CD4-positive, alpha-beta memory T cell (primary cell): ENCODE measurements at regions of chr4 and their contacts with region 1.

Region 1: GRCh38 chr4:6716018-6716911 is at the start of gene BLOC1S4:
- DNase-seq: peak; percentile 86 to 94 (median 93)
- H3K4me3 ChIP-seq: peak within 1 kb of the TSS; percentile 38 to 84
- H3K4me3 Mint-ChIP-seq: peak within 1 kb of the TSS; percentile 87 to 99 (median 93)
- H3K27ac ChIP-seq: peak within 1 kb of the TSS; percentile 92
- H3K27ac Mint-ChIP-seq: peak within 1 kb of the TSS; percentile 92 to 99 (median 98)
- H3K4me1 ChIP-seq: peaks cover 38% of the 10 kb centered on the region
- H3K4me1 Mint-ChIP-seq: peaks cover 25 to 48% (median 35%) of the 10 kb centered on the region in 4 donors
- H3K27me3 ChIP-seq: no peaks in the 10 kb centered on the region
- H3K27me3 Mint-ChIP-seq: no peaks in the 10 kb centered on the region
- total RNA-seq, gene BLOC1S4: 35.3 to 37.8 TPM

Region 2: DNA sequence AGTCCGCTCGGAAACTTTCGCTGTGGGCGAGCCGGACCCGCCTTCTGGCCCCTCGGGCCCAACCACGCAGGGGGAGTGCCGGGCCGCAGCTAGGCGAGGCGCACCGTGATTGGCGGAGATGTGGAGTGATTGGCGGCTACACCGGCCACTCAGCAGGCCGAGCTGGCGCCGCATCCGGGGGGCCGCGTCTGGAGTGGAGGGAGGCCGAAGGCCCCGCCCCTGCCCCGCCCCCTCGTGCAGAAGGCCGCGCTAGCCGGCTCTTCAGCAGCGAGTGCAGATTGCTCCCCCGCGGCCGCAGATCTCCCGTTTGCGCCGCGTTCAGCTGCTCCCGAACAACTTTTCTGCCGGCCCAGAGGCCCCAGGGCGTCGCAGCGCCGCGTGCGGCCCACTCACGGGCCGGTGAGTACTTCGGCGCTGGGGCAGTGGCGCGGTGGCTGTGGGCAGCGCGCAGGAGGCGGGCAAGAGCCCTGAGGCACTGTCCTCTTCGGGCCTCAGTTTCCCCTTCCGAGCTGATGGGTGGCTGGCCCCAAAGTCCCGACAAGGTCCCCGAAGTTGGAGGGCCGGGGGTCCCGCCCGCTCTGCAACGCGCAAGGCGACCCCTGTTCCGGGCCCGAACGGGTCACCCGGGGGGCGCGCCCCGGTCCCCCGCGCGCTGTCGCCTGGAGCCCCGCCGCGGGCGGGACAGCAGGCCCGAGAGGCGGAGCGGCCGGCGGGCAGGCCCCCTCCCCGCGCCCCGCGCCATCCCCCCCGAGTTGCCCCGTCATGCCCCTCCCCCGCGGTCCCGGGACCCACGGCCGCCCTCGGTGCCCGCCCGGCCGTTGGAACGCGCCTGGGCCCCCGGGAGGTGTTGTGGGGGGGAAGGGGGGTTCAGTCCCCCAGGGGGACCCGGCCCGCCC is 446.4 kb before region 1 on chr4 and contains the start of gene WFS1:
- CTCF ChIA-PET with region 1: no interaction called
- POLR2A ChIA-PET with region 1: no interaction called
- intact Hi-C with region 1: loop called (anchors 5 kb)
- DNase-seq: peak; percentile 94 to 96 (median 94)
- H3K4me3 ChIP-seq: peak within 1 kb of the TSS in 1 of 2 donors; percentile 75
- H3K4me3 Mint-ChIP-seq: peak within 1 kb of the TSS; percentile 85 to 92 (median 88)
- H3K27ac ChIP-seq: peak within 1 kb of the TSS; percentile 49
- H3K27ac Mint-ChIP-seq: peak within 1 kb of the TSS in 6 of 7 donors; percentile 48 to 81 (median 71)
- H3K4me1 ChIP-seq: peaks cover 10% of the 10 kb centered on the region
- H3K4me1 Mint-ChIP-seq: peaks cover 13 to 25% (median 14%) of the 10 kb centered on the region in 4 donors
- H3K27me3 ChIP-seq: no peaks in the 10 kb centered on the region
- H3K27me3 Mint-ChIP-seq: peaks cover 0 to 2% of the 10 kb centered on the region in 2 donors
- total RNA-seq, gene WFS1: 5.4 to 5.5 TPM

Region 3: DNA sequence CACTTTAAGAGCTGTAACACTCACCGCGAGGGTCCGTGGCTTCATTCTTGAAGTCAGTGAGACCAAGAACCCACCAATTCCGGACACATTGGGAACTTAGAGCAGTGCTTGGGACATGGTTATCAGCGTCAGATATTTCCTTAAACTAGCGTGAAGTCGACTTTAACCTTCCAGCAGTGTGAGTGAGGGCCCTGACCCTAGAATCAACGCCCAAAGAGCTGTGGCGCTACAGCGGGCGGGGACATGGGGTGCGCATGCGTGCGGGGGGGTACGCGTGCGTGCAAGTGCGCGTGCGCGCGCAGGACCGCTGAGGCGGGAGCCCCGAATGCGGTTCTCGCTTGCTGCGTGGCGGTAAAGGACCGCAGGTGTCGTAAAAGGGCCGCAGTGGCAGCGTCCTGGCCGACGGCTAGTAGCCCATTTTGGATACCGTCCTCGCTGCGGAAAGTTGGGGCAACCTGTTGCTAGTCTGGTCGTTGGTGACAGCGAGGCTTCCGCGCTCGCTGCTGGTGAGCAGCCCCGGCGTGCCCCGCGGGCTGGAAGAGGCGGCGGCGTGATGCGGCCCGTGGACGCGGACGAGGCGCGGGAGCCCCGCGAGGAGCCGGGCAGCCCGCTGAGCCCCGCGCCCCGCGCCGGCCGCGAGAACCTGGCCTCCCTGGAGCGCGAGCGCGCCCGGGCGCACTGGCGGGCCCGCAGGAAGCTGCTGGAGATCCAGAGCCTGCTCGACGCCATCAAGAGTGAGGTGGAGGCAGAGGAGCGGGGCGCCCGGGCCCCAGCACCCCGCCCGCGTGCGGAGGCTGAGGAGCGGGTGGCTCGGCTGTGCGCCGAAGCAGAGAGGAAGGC is 42.4 kb before region 1 on chr4:
- CTCF ChIA-PET with region 1: interaction called, 115 read pairs
- POLR2A ChIA-PET with region 1: interaction called, 1,401 read pairs
- intact Hi-C with region 1: loop called (anchors 1 kb)
- DNase-seq: peak; percentile 94 to 96 (median 96)
- H3K4me3 ChIP-seq: peak overlapping the region; percentile 59 to 65
- H3K4me3 Mint-ChIP-seq: peak overlapping the region; percentile 92 to 99 (median 98)
- H3K27ac ChIP-seq: peak overlapping the region; percentile 71
- H3K27ac Mint-ChIP-seq: peak overlapping the region; percentile 95 to 99 (median 98)
- H3K4me1 ChIP-seq: peaks cover 36% of the 10 kb centered on the region
- H3K4me1 Mint-ChIP-seq: peaks cover 39 to 59% (median 49%) of the 10 kb centered on the region in 4 donors
- H3K27me3 ChIP-seq: no peaks in the 10 kb centered on the region
- H3K27me3 Mint-ChIP-seq: no peaks in the 10 kb centered on the region

Region 4: DNA sequence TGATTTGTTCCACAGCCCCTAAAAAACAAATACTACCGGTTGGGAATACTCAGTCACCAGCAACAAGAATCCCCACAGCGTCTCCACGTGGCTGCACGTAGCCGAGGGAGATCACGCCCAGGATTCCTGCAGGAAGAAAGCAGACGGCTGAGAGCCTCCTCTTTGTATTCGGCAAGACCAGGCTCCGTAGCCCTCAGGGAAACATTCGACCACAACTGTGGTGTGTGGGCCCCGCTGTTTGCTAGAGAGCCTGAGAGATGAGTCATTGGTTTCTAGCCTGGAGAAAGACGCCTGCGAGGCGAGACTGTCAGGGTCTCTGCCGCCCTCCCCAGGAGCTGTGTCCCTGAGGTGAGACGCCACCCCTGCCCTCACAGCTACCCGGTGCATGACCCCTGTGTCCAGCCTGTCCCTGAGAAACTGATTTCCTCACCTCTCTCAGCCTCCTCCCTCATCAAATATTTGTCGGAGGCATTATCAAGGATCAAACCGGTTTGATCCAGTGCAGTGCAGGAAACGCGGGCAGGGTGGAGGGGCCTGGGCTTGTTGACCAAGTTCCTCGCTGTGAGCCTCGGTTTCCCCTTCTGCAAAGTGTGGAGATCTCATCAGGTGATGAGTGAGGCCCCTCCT is 27.3 kb before region 1 on chr4:
- CTCF ChIA-PET with region 1: interaction called, 21 read pairs
- POLR2A ChIA-PET with region 1: interaction called, 1,401 read pairs
- intact Hi-C with region 1: loop called (anchors 1 kb)
- DNase-seq: peak; percentile 60 to 92 (median 64)
- H3K4me3 ChIP-seq: peak overlapping the region; percentile 18 to 55
- H3K4me3 Mint-ChIP-seq: peak overlapping the region; percentile 87 to 97 (median 93)
- H3K27ac ChIP-seq: peak overlapping the region; percentile 62
- H3K27ac Mint-ChIP-seq: peak overlapping the region; percentile 89 to 99 (median 97)
- H3K4me1 ChIP-seq: peaks cover 73% of the 10 kb centered on the region
- H3K4me1 Mint-ChIP-seq: peaks cover 55 to 88% (median 72%) of the 10 kb centered on the region in 4 donors
- H3K27me3 ChIP-seq: no peaks in the 10 kb centered on the region
- H3K27me3 Mint-ChIP-seq: no peaks in the 10 kb centered on the region

Region 5: GRCh38 chr4:6701371-6701770 is 14.9 kb before region 1 on chr4:
- CTCF ChIA-PET with region 1: interaction called, 21 read pairs
- POLR2A ChIA-PET with region 1: interaction called, 663 read pairs
- intact Hi-C with region 1: no loop called
- DNase-seq: peak in 3 of 5 donors; percentile 36 to 47 (median 40)
- H3K4me3 ChIP-seq: no peak overlapping the region
- H3K4me3 Mint-ChIP-seq: no peak overlapping the region
- H3K27ac ChIP-seq: no peak overlapping the region
- H3K27ac Mint-ChIP-seq: peak overlapping the region in 4 of 7 donors; percentile 19 to 84 (median 44)
- H3K4me1 ChIP-seq: peaks cover 73% of the 10 kb centered on the region
- H3K4me1 Mint-ChIP-seq: peaks cover 56 to 80% (median 69%) of the 10 kb centered on the region in 4 donors
- H3K27me3 ChIP-seq: no peaks in the 10 kb centered on the region
- H3K27me3 Mint-ChIP-seq: no peaks in the 10 kb centered on the region

Region 6: DNA sequence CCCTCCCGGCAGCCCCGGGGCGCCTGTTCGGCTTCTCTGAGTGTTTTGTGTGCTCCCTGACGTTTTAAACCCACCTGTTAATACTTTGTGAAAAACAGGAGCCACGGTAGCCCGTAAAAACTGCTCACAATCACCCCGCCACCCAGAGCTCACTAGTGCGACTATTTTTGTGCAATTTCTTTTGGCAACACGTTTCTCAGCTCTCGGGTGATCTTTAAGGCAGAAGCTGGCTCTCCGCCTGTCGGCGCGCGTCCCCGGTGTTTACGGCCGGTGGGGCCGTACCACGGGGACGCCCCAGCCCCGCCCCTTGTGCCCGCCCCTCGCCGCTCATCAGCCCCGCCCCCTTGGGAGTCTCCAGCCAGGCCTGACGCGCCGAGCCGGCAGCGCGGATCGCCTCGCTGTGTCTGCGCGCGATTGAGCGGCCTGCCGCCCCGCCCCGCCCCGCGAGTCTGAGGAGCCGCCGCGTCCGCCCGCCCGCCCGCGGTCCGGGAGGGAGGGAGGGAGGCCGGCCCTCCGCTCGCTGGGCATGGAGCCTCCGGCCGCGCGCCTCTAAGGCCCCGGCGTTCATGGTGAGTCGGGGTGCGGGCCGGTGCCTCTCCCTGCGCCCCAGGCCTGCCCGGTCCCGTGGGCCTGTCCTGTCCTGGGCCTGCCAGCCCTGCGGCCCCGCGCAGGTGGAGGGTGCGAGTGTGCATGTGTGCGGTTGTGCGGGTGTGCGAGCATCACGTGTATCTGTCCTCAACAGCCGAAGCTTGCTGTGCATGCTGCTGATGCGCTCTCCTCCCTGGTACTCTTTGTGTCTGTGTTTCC is 270.7 kb after region 1 on chr4:
- CTCF ChIA-PET with region 1: interaction called, 5 read pairs
- POLR2A ChIA-PET with region 1: interaction called, 6 read pairs
- intact Hi-C with region 1: loop called (anchors 1 kb)
- DNase-seq: peak; percentile 90 to 93 (median 92)
- H3K4me3 ChIP-seq: peak overlapping the region; percentile 65 to 83
- H3K4me3 Mint-ChIP-seq: peak overlapping the region; percentile 94 to 99 (median 95)
- H3K27ac ChIP-seq: peak overlapping the region; percentile 90
- H3K27ac Mint-ChIP-seq: peak overlapping the region; percentile 95 to 98 (median 96)
- H3K4me1 ChIP-seq: peaks cover 78% of the 10 kb centered on the region
- H3K4me1 Mint-ChIP-seq: peaks cover 57 to 86% (median 70%) of the 10 kb centered on the region in 4 donors
- H3K27me3 ChIP-seq: no peaks in the 10 kb centered on the region
- H3K27me3 Mint-ChIP-seq: no peaks in the 10 kb centered on the region

Region 7: GRCh38 chr4:7124689-7125442 is 408.6 kb after region 1 on chr4:
- CTCF ChIA-PET with region 1: no interaction called
- POLR2A ChIA-PET with region 1: no interaction called
- intact Hi-C with region 1: no loop called
- DNase-seq: no peak
- H3K4me3 ChIP-seq: no peak overlapping the region
- H3K4me3 Mint-ChIP-seq: no peak overlapping the region
- H3K27ac ChIP-seq: no peak overlapping the region
- H3K27ac Mint-ChIP-seq: no peak overlapping the region
- H3K4me1 ChIP-seq: no peaks in the 10 kb centered on the region
- H3K4me1 Mint-ChIP-seq: no peaks in the 10 kb centered on the region
- H3K27me3 ChIP-seq: no peaks in the 10 kb centered on the region
- H3K27me3 Mint-ChIP-seq: peaks cover 9 to 13% of the 10 kb centered on the region in 2 donors